ENCODE measurements at regions of chr17 and their contacts with region 1.

Region 1: DNA sequence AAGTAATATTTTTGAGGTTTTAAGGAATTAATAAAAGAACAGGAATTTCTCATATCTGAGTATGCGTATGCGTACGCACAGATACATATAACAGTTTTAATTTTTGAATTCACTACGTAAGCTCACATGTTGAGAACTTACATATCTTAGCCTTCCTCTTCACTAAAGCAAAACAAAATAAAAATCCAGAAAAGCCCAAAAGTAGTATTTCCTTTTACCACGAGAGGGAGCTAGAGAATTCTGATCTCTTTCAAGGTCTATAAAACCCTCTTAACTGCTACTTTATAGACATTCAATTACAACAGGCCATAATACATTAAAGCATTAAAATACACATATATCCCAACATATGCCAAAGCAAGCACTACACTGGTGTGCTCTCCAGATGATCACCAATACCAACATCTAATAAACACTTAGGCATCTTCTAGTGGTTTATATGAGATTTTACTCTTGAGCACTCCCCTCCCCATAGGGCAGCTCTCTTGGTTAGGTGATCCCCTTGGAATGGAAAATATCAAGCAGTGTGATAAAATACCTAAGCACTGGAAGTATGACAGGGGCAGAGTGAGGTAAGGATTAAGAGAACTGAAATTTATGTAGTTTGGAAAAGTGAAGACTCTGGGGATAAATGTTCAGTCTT is 94.0 kb downstream of the SKAP1 start:
- DNase-seq: peak in 1 of 2 experiments; percentile 67
- H3K4me3 ChIP-seq: no peak overlapping the region
- H3K4me1 ChIP-seq: no peaks in the 10 kb centered on the region
- H3K27me3 ChIP-seq: peaks cover 85% of the 10 kb centered on the region

Region 2: DNA sequence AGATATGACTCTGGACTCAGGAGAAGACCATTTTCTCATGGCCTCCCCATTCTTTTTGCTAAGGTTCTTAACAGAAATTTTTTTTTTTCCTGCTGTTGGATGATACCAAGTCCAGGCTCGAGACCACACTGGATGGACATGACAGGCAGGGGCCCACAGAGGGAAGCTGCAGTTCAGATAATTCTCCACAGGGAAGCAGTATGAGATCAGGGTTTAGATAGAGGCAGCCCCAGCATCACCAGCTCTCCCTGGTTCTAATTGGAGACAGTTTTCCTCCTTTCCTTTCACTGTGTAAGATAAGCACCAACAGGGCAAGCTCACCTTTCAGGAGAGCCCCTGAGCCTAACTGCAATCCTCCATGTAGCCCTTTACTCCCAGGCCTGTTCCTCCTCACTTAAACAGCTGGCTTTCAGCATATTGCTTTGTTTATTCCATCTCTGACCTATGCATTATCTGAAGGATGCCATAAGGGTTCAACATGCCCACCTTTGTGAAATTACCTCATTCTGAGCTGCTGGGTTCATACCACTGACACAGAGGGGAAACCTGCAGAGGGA is 120.3 kb before region 1 on chr17:
- in situ Hi-C with region 1: no loop called
- DNase-seq: peak; percentile 45 to 50
- H3K4me3 ChIP-seq: no peak overlapping the region
- H3K4me1 ChIP-seq: no peaks in the 10 kb centered on the region; the same call in 1 of the 2 replicates
- H3K27me3 ChIP-seq: peaks cover 25% of the 10 kb centered on the region

Region 3: GRCh38 chr17:48593840-48594537 is 258.0 kb after region 1 on chr17:
- in situ Hi-C with region 1: loop called (anchors 5 kb)
- DNase-seq: peak; percentile 87 to 89
- H3K4me3 ChIP-seq: no peak overlapping the region; the same call in 1 of the 2 replicates
- H3K4me1 ChIP-seq: peaks cover 11% of the 10 kb centered on the region
- H3K27me3 ChIP-seq: peaks cover 25% of the 10 kb centered on the region

Measured in HAP-1 (cell line).